Endothelial cell of umbilical vein (primary cell): ENCODE measurements at regions of chr5 and their contacts with region 1.

Region 1: GRCh38 chr5:180868960-180869359 is 7.9 kb upstream of the ZFP62 start:
- DNase-seq: peak; percentile 79
- H3K4me3 ChIP-seq: no peak overlapping the region
- H3K27ac ChIP-seq: no peak overlapping the region
- H3K4me1 ChIP-seq: peaks cover 4% of the 10 kb centered on the region
- H3K27me3 ChIP-seq: peaks cover 2 to 7% of the 10 kb centered on the region in 2 experiments
- CTCF ChIP-seq: peak; percentile 76 to 79
- POLR2A ChIP-seq: no peak

Region 2: DNA sequence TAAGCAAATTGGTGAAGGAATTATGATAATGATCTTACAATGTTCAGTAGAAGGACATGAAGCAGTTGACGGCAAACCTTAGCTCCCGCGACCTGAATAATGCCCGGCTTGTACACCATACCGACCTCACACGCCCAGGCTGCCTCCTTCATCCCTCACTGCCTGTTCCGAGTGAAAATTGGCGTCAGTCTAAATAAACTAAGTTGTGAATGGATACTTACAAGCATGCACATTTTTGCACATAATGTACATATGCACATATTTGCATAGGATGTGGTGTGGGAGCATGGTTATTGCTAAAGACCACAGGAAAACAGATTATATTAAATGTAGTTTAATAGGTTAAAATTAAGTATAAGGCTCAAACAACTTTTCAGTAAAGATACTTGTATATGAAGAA is 144.0 kb before region 1 on chr5:
- CTCF ChIA-PET with region 1: no interaction called
- POLR2A ChIA-PET with region 1: no interaction called
- dilution Hi-C with region 1: no loop called
- intact Hi-C with region 1: no loop called
- DNase-seq: no peak
- H3K4me3 ChIP-seq: no peak overlapping the region
- H3K27ac ChIP-seq: no peak overlapping the region
- H3K4me1 ChIP-seq: no peaks in the 10 kb centered on the region
- H3K27me3 ChIP-seq: peaks cover 0 to 2% of the 10 kb centered on the region in 2 experiments
- CTCF ChIP-seq: no peak
- POLR2A ChIP-seq: no peak

Region 3: GRCh38 chr5:180810210-180810958 is 58.6 kb before region 1 on chr5:
- CTCF ChIA-PET with region 1: interaction called, 14 read pairs
- POLR2A ChIA-PET with region 1: no interaction called
- dilution Hi-C with region 1: no loop called
- intact Hi-C with region 1: no loop called
- DNase-seq: peak; percentile 95
- H3K4me3 ChIP-seq: peak overlapping the region; percentile 43 to 72 (median 60)
- H3K27ac ChIP-seq: peak overlapping the region; percentile 88
- H3K4me1 ChIP-seq: peaks cover 38% of the 10 kb centered on the region
- H3K27me3 ChIP-seq: no peaks in the 10 kb centered on the region
- CTCF ChIP-seq: no peak
- POLR2A ChIP-seq: peak; percentile 56

Region 4: DNA sequence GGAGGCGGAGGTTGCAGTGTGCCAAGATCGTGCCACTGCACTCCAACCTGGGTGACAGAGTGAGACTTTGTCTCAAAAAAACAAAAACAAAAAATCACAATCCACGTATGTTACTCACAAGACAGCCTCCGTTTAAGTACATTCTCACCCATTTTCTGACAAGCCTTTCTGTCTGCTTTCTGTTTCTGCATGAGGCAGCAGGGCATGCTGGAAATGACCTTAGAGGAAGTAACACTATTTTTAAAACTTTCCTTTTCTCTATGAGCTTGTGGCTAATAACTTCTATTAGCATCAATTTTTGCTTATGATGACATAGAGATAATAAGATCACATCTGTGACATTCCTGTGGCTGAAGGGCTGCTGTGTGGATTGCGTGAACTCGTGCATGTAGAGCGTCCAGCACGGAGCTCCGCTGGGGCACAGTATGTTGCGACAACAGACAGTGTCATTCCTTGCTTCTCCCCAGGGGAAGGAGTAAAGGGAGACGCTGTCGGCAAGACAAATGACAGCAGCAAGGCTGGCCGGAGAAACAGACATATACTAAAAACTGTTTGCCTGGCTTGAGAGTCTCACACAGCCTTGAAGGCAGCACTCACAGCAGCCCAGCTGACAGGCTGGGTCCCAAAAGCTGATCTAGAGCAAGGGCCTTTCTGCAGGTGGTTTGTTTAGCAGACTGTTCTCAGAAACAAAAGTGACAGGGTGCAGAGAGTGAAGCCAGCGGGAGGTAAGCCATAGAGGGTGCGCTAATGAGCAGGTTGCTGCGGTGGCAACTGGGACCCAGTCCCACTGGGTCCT is 121.3 kb after region 1 on chr5:
- CTCF ChIA-PET with region 1: no interaction called
- POLR2A ChIA-PET with region 1: no interaction called
- dilution Hi-C with region 1: no loop called
- intact Hi-C with region 1: no loop called
- DNase-seq: no peak
- H3K4me3 ChIP-seq: no peak overlapping the region
- H3K27ac ChIP-seq: no peak overlapping the region
- H3K4me1 ChIP-seq: no peaks in the 10 kb centered on the region
- H3K27me3 ChIP-seq: no peaks in the 10 kb centered on the region
- CTCF ChIP-seq: no peak
- POLR2A ChIP-seq: no peak

Region 5: GRCh38 chr5:181043285-181044092 is 174.5 kb after region 1 on chr5:
- CTCF ChIA-PET with region 1: no interaction called
- POLR2A ChIA-PET with region 1: no interaction called
- dilution Hi-C with region 1: no loop called
- intact Hi-C with region 1: no loop called
- DNase-seq: no peak
- H3K4me3 ChIP-seq: no peak overlapping the region
- H3K27ac ChIP-seq: no peak overlapping the region
- H3K4me1 ChIP-seq: no peaks in the 10 kb centered on the region
- H3K27me3 ChIP-seq: no peaks in the 10 kb centered on the region
- CTCF ChIP-seq: no peak
- POLR2A ChIP-seq: no peak

Region 6: GRCh38 chr5:181100121-181101015 is 231.4 kb after region 1 on chr5:
- CTCF ChIA-PET with region 1: interaction called, 11 read pairs
- POLR2A ChIA-PET with region 1: no interaction called
- dilution Hi-C with region 1: no loop called
- intact Hi-C with region 1: no loop called
- DNase-seq: peak; percentile 5
- H3K4me3 ChIP-seq: no peak overlapping the region
- H3K27ac ChIP-seq: no peak overlapping the region
- H3K4me1 ChIP-seq: no peaks in the 10 kb centered on the region
- H3K27me3 ChIP-seq: peaks cover 8 to 17% of the 10 kb centered on the region in 2 experiments
- CTCF ChIP-seq: no peak
- POLR2A ChIP-seq: no peak

Region 7: DNA sequence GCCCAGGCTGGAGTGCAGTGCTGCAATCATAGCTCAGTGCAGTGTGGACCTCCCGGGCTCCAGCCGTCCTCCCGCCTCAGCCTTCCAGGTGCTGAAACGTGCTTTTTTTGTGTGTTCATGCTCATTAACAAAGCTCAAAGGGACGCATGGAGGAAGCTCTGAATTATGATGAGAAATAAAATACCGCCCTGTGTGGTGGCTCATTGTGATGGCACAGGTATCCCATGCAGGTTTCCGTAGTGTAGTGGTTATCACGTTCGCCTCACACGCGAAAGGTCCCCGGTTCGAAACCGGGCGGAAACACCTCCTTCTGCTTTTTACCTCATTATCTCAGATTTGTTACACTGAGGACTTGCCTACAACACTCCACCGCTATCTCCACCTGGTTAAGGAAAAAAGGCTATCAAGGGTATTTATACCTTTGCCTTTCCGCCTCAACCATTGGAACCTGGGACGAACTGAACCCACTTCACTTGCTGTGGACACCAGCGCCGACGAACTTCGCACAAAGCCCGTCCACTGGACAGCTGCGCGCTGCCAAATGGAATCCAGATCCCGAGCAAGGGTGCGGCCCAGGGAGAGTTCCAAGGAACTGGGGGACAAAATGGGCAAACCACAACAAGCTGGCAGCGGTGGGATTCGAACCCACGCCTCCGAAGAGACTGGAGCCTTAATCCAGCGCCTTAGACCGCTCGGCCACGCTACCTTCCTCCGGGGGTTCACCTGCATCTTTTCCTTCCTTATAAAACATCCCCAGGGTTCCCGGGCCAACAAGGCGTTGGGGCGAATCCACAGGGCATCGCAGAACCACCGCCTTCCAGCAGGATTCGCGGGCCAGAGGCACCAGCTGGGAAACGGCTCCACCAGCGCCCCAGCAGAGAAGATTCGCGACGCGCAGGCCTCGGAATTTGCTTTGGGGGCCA is 304.7 kb after region 1 on chr5:
- CTCF ChIA-PET with region 1: interaction called, 11 read pairs
- POLR2A ChIA-PET with region 1: no interaction called
- dilution Hi-C with region 1: no loop called
- intact Hi-C with region 1: loop called (anchors 2 kb)
- DNase-seq: peak; percentile 43
- H3K4me3 ChIP-seq: peak overlapping the region in 1 of 3 experiments; percentile 14
- H3K27ac ChIP-seq: no peak overlapping the region
- H3K4me1 ChIP-seq: peaks cover 7% of the 10 kb centered on the region
- H3K27me3 ChIP-seq: peaks cover 15 to 19% of the 10 kb centered on the region in 2 experiments
- CTCF ChIP-seq: no peak
- POLR2A ChIP-seq: no peak